PC-9 (cell line): ENCODE measurements at regions of chr4 and their contacts with region 1.

Region 1: DNA sequence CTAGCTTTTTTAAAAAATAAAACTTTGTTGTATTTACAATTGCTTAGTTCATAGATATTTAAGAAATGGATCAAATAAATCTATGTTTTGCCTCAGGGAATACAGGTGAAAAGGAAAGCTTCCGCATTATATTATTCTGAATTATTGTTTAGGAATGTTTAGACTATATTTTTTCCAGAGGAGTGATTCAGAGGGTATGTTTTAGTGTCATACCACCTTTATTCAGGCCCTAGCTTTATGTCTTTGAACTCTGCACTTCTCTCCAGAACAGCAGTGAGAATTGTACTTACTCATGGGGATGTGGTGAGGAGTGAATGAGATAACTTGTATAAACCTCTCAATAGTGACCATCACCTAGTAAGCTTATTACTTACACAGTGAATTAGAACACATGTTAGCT is 14.0 kb downstream of the SLIT2 start:
- DNase-seq: no peak
- H3K4me3 ChIP-seq: no peak overlapping the region
- H3K27ac ChIP-seq: no peak overlapping the region
- H3K4me1 ChIP-seq: no peaks in the 10 kb centered on the region
- H3K27me3 ChIP-seq: no peaks in the 10 kb centered on the region
- CTCF ChIP-seq: no peak

Region 2: DNA sequence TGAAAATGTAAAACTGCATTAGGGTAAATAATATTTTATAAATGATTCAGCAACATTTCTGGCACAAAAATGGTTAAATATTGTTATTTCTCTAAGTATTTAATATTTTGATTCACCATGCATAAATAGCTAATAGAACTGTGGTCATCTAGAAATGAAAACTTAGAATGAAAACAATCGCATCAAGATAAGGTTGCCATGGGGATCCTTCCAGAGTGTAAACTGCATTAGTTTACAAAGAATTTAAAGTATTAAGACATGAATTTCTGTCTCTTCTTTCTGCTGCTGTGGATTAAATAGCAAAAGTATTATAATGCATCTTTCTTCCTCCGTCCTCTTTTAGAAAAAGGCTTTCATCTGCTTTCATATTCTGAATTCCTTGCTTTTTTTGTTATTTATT is 1078.6 kb before region 1 on chr4:
- CTCF ChIA-PET with region 1: interaction called, 10 read pairs
- POLR2A ChIA-PET with region 1: no interaction called
- intact Hi-C with region 1: no loop called
- DNase-seq: no peak
- H3K4me3 ChIP-seq: no peak overlapping the region
- H3K27ac ChIP-seq: no peak overlapping the region
- H3K4me1 ChIP-seq: no peaks in the 10 kb centered on the region
- H3K27me3 ChIP-seq: no peaks in the 10 kb centered on the region
- CTCF ChIP-seq: no peak